CD8-positive, alpha-beta T cell (primary cell): ENCODE measurements at regions of chr18 and their contacts with region 1.

Region 1: GRCh38 chr18:10787293-10787901 is 261.6 kb downstream of the NAPG start:
- DNase-seq: peak; percentile 57 to 84 (median 78)
- ATAC-seq: peak; percentile 84
- H3K4me3 ChIP-seq: no peak overlapping the region
- H3K4me3 Mint-ChIP-seq: no peak overlapping the region
- H3K27ac ChIP-seq: no peak overlapping the region
- H3K27ac Mint-ChIP-seq: no peak overlapping the region
- H3K4me1 ChIP-seq: no peaks in the 10 kb centered on the region
- H3K4me1 Mint-ChIP-seq: peaks cover 7% of the 10 kb centered on the region
- H3K27me3 ChIP-seq: peaks cover 0 to 3% of the 10 kb centered on the region in 2 experiments
- H3K27me3 Mint-ChIP-seq: peaks cover 5% of the 10 kb centered on the region
- CTCF ChIP-seq: peak; percentile 65

Region 2: DNA sequence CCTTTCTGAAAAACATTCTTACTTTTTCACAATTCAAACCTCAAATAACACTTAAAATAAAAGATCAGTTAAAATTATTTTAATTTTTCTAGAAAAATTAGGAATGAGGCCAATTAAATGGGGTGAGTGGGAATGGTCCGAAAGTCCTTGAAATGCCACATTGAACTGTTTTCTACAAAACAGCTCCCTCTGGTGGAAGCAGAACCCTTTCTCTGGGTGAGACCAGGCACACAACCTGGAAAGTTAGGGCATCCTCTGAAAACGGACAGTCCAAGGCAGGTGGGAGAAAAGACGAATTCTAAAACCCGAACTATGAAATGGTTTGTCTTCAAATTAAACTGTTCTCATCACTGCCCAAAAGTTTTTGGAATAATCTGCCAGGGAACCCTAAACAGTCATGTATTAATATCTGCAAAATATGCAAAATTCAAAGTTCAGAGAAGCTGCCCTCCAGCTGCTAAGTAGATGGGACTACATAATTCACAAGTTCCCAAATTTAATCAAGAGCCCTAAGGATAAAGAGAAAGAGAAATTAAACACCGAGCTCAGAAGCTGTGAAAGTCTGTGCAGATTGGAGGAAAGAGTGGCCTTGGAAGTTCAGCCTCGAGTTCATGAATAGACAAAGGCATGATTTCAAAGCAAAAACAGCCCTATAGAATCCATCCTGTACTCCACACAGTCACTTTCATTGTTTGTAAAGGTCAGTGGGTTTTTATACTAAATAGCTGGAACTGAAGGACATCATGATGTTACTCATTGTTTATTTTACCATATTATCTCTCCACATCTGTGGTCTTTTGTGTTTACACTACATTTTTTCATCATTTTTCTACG is 253.6 kb after region 1 on chr18:
- CTCF ChIA-PET with region 1: no interaction called
- POLR2A ChIA-PET with region 1: no interaction called
- intact Hi-C with region 1: loop called in 1 of 2 experiments (anchors 1 kb)
- DNase-seq: peak in 2 of 9 experiments; percentile 12 to 33
- ATAC-seq: no peak
- H3K4me3 ChIP-seq: no peak overlapping the region
- H3K4me3 Mint-ChIP-seq: no peak overlapping the region
- H3K27ac ChIP-seq: no peak overlapping the region
- H3K27ac Mint-ChIP-seq: no peak overlapping the region
- H3K4me1 ChIP-seq: no peaks in the 10 kb centered on the region
- H3K4me1 Mint-ChIP-seq: no peaks in the 10 kb centered on the region
- H3K27me3 ChIP-seq: no peaks in the 10 kb centered on the region
- H3K27me3 Mint-ChIP-seq: no peaks in the 10 kb centered on the region
- CTCF ChIP-seq: no peak

Region 3: GRCh38 chr18:11741505-11742145 is 954.2 kb after region 1 on chr18:
- CTCF ChIA-PET with region 1: no interaction called
- POLR2A ChIA-PET with region 1: no interaction called
- intact Hi-C with region 1: loop called in 1 of 2 experiments (anchors 10 kb)
- DNase-seq: peak in 2 of 9 experiments; percentile 17 to 37
- ATAC-seq: peak; percentile 44
- H3K4me3 ChIP-seq: no peak overlapping the region
- H3K4me3 Mint-ChIP-seq: no peak overlapping the region
- H3K27ac ChIP-seq: no peak overlapping the region
- H3K27ac Mint-ChIP-seq: no peak overlapping the region
- H3K4me1 ChIP-seq: no peaks in the 10 kb centered on the region
- H3K4me1 Mint-ChIP-seq: no peaks in the 10 kb centered on the region
- H3K27me3 ChIP-seq: no peaks in the 10 kb centered on the region
- H3K27me3 Mint-ChIP-seq: peaks cover 35% of the 10 kb centered on the region
- CTCF ChIP-seq: peak; percentile 61